AG04449 (cell line): ENCODE measurements at regions of chr15 and their contacts with region 1.

Region 1: GRCh38 chr15:88246666-88247446 is 9.7 kb downstream of the NTRK3 start:
- DNase-seq: no peak
- H3K4me3 ChIP-seq: no peak overlapping the region
- CTCF ChIP-seq: peak; percentile 93

Region 2: DNA sequence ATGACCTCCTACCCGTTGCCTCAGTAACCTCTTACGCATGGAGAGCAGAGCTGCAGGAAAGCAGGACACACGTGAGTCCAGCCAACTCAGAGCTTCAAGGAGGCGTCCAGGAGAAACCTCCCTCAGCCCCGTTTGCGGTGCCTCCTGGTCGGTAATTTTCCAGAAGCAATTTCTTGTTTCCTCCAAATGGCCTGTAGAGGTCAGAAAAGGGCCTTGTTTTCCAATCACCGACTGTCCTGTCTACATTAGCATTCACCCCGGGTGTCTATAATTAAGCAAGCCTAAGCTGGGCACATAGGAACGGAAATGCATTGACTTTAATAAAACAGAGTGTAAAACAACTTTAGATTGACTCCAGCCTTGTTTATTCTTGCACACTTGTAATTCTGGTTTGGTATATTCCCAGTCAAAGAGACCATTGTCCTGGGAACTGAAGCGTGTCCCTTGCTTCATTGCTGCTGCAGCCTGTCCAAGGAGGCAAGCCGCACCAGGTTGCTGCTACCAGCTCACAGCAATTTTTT is 1331.0 kb before region 1 on chr15:
- CTCF ChIA-PET with region 1: interaction called, 66 read pairs
- POLR2A ChIA-PET with region 1: no interaction called
- DNase-seq: peak; percentile 9
- H3K4me3 ChIP-seq: no peak overlapping the region
- CTCF ChIP-seq: peak; percentile 36

Region 3: DNA sequence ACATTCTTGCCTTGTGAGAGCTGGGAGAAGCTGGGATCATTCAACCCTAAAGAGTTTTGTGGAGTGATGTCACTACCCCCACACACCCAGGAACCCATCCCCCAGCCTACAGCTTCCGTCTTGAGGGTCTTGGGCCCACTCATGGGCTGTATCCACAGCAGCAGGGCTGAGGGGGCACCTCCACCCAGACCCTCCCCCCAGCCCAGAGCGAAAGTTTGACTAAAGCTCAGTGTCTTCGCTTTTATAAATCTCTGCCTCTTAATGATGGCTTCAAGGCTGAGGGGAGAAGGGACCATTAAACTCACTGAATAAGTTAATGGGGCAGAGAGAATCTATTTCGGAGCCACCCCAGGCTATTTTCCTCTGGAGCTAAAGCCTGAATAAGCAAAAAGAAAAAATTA is 14.1 kb before region 1 on chr15:
- CTCF ChIA-PET with region 1: interaction called, 57 read pairs
- POLR2A ChIA-PET with region 1: no interaction called
- DNase-seq: no peak
- H3K4me3 ChIP-seq: no peak overlapping the region
- CTCF ChIP-seq: no peak

Region 4: DNA sequence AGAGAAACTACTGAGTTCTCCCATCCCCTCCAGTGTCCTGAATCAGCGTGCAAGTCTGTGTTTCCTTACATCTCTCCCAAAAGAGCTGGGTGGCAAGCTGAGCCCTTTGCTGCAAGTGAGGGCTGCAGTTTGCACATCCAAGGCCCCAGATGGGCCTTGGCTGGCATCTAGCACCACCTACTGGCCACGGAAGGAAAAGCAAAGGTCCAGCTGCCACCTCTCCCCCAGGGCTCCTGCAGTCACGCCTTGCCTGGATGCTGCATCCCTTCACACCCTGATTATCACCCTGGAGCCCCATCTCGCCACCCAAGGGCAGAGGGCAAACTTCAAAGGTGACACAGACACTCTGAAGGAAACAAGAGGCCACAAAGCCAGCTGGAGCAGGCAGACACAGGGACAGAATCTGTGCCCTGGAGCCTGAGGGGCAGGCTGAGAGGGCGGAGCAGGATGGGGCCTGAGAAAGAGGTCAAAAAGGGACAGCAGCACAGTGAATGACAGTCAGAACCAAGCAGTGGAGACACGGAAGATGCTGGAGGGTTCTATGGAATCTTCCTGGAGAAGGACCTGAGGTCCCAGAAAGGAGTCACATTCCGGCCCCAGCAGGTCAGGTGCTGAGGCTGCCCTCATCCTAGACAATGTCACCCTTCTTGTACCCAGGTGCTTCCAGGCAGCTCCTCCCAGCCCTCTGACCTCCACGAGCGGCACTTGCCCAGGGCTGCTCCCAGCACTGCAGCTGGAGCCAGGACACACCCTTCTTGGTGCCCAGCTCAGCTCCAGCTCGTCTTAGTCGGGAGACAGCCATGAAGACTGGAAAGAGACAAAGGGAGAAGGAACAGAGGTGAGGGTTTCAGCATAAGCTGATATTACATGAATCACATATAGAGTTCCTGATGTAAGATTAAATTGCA is 28.0 kb after region 1 on chr15:
- CTCF ChIA-PET with region 1: interaction called, 104 read pairs
- POLR2A ChIA-PET with region 1: no interaction called
- DNase-seq: no peak
- H3K4me3 ChIP-seq: no peak overlapping the region
- CTCF ChIP-seq: peak; percentile 91